ENCODE measurements at regions of chr4 and their contacts with region 1.

Region 1: DNA sequence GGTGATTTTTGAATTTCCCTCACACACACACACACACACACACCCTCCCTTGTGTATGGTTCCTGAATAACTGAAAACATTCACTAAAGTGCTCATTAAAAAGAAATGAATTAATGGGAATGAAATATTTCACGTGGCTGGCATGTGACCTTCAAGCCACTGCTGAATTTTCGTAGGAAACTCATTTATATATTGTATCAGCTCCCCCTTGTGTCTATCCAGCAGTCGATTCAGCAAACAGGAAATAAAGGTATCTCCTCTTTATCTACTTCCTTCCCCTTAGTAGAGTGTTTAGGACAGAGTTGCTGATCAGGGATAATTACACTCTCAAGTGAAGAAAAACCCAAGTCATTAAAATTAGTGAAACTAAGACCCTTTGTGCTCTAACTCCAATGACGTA is 912.6 kb upstream of the LCORL start:
- DNase-seq: no peak
- ATAC-seq: peak in 2 of 8 donors; percentile 39 to 62
- H3K4me3 ChIP-seq: no peak overlapping the region
- H3K27ac ChIP-seq: no peak overlapping the region
- H3K4me1 ChIP-seq: peaks cover 0 to 16% (median 0%) of the 10 kb centered on the region in 9 donors
- H3K27me3 ChIP-seq: no peaks in the 10 kb centered on the region
- CTCF ChIP-seq: peak in 6 of 9 donors; percentile 11 to 46 (median 42)

Region 2: GRCh38 chr4:18689308-18690115 is 244.7 kb before region 1 on chr4:
- intact Hi-C with region 1: loop called in 9 of 10 experiments (anchors 1 to 10 kb)
- DNase-seq: peak in 1 of 2 donors; percentile 41
- ATAC-seq: peak in 5 of 8 donors; percentile 46 to 67 (median 63)
- H3K4me3 ChIP-seq: no peak overlapping the region
- H3K27ac ChIP-seq: no peak overlapping the region
- H3K4me1 ChIP-seq: peaks cover 0 to 9% (median 0%) of the 10 kb centered on the region in 9 donors
- H3K27me3 ChIP-seq: no peaks in the 10 kb centered on the region
- CTCF ChIP-seq: peak; percentile 74 to 91 (median 86)

Region 3: DNA sequence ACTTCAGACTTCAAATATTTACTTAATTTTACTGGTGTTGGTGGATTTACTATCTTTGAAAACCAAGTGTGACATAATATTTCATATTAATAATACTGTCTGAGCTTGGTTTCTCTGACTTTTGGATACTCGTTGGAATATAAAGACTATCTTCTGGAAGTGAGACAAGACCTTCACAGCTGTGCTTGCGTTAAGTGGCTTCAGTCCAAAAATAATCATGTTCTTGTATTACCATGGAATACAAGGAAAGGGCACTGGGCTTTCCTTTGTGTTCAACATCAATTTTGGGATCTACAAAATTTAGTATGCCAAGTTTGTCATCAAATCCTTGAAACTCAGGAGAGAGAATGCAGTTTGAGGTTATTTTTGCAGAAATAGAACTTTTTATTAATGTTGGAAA is 200.2 kb before region 1 on chr4:
- intact Hi-C with region 1: loop called in 2 of 10 experiments (anchors 2 to 5 kb)
- DNase-seq: no peak
- ATAC-seq: peak in 4 of 8 donors; percentile 53 to 78 (median 64)
- H3K4me3 ChIP-seq: no peak overlapping the region
- H3K27ac ChIP-seq: peak overlapping the region in 9 of 10 donors; percentile 16 to 70 (median 51)
- H3K4me1 ChIP-seq: peaks cover 0 to 27% (median 12%) of the 10 kb centered on the region in 9 donors
- H3K27me3 ChIP-seq: no peaks in the 10 kb centered on the region
- CTCF ChIP-seq: no peak

Measured in heart right ventricle (tissue), 16 donors.